Mammary epithelial cell (primary cell): ENCODE measurements at regions of chr9 and their contacts with region 1.

Region 1: GRCh38 chr9:87324613-87325194 is 173.0 kb upstream of the DAPK1 start:
- DNase-seq: peak; percentile 45
- H3K4me3 ChIP-seq: no peak overlapping the region
- H3K27ac ChIP-seq: no peak overlapping the region
- H3K4me1 ChIP-seq: peaks cover 10% of the 10 kb centered on the region
- H3K27me3 ChIP-seq: no peaks in the 10 kb centered on the region
- CTCF ChIP-seq: peak; percentile 54 to 68

Region 2: DNA sequence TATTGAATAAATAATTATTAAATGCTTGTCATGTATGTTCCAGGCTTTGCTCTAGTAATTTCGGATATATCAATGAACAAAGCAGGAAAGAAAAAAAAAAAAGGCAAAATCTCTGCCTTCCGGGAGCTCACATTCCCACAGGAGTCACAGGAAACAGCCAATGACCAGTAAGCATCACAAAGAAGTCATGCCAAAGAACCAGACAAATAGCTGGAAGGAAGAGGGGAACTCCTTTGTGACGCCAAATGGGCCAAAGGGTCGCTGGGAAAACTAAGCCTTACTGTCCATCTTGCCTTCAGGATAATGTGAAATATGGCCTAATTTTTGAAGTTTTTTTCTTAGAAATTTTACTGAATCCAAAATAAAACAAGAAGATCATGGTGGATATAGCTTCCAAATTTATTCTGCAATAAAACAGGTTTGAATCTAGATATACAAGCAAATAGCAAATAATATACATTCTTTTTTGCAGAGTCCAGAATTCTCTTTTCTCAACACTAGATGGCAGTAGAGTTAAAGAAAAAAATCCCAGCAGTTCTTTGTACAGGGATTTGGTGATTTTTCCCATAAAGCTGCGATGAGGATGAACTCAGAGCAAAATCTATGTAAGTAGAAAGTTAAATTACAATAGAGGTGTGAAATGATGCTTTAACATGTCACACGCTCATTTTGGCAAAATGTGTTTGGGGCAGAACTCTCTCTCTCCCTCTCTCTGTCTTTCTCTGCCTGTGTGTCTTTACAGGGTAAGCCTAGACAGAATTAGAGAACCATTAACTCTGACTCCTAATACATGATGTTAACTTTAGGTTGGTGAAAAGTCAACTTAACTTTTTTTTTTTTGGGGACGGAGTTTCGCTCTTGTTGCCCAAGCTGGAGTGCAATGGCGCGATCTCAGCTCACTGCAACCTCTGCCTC is 910.5 kb before region 1 on chr9:
- CTCF ChIA-PET with region 1: no interaction called
- dilution Hi-C with region 1: no loop called
- in situ Hi-C with region 1: no loop called
- intact Hi-C with region 1: loop called (anchors 1 kb)
- DNase-seq: no peak
- H3K4me3 ChIP-seq: no peak overlapping the region
- H3K27ac ChIP-seq: no peak overlapping the region
- H3K4me1 ChIP-seq: no peaks in the 10 kb centered on the region
- H3K27me3 ChIP-seq: no peaks in the 10 kb centered on the region
- CTCF ChIP-seq: peak; percentile 59 to 61

Region 3: DNA sequence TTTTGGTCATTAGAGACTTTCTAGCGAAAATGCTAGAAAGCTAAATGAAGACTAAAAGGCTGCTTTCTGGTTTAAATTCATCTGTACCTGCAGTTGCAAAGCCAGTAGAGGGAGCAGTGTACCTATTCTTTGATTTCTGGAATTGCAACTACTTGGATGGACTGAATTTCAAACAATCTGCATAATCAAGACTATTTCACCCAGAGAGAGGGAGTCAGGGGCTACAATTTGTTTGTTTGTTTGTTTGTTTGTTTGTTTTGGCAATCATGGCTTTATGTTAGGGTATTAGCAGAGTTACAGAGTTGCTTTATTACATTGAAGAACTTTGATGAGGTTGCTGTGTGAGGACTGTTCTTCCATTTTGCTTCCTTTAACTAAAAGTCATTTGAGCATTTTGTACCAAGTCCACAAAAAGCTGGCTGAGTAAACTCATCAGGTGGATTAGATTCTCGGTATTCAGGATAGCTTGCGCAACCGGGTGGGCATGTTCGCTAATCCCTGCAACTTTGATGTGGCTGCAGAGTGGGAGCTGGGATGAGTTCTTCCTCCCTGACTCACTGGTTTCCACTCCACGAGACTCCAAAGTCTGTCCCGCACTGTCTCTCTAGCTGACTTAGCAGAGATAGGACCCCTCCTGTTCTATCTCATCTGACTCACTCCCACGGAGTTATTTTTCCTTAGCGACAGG is 890.5 kb before region 1 on chr9:
- CTCF ChIA-PET with region 1: no interaction called
- dilution Hi-C with region 1: no loop called
- in situ Hi-C with region 1: loop called (anchors 10 kb)
- intact Hi-C with region 1: loop called (anchors 1 kb)
- DNase-seq: peak; percentile 35
- H3K4me3 ChIP-seq: no peak overlapping the region
- H3K27ac ChIP-seq: no peak overlapping the region
- H3K4me1 ChIP-seq: peaks cover 8% of the 10 kb centered on the region
- H3K27me3 ChIP-seq: no peaks in the 10 kb centered on the region
- CTCF ChIP-seq: peak; percentile 82 to 84

Region 4: GRCh38 chr9:86614871-86615849 is 709.5 kb before region 1 on chr9:
- CTCF ChIA-PET with region 1: no interaction called
- dilution Hi-C with region 1: no loop called
- in situ Hi-C with region 1: loop called in 1 of 2 experiments (anchors 10 kb)
- intact Hi-C with region 1: loop called (anchors 5 kb)
- DNase-seq: peak; percentile 35
- H3K4me3 ChIP-seq: no peak overlapping the region
- H3K27ac ChIP-seq: no peak overlapping the region
- H3K4me1 ChIP-seq: no peaks in the 10 kb centered on the region
- H3K27me3 ChIP-seq: no peaks in the 10 kb centered on the region
- CTCF ChIP-seq: peak; percentile 56 to 62

Region 5: GRCh38 chr9:86637515-86637914 is 687.2 kb before region 1 on chr9:
- CTCF ChIA-PET with region 1: no interaction called
- dilution Hi-C with region 1: no loop called
- in situ Hi-C with region 1: loop called in 1 of 2 experiments (anchors 10 kb)
- intact Hi-C with region 1: loop called (anchors 1 kb)
- DNase-seq: no peak
- H3K4me3 ChIP-seq: no peak overlapping the region
- H3K27ac ChIP-seq: no peak overlapping the region
- H3K4me1 ChIP-seq: no peaks in the 10 kb centered on the region
- H3K27me3 ChIP-seq: no peaks in the 10 kb centered on the region
- CTCF ChIP-seq: peak; percentile 34 to 83

Region 6: DNA sequence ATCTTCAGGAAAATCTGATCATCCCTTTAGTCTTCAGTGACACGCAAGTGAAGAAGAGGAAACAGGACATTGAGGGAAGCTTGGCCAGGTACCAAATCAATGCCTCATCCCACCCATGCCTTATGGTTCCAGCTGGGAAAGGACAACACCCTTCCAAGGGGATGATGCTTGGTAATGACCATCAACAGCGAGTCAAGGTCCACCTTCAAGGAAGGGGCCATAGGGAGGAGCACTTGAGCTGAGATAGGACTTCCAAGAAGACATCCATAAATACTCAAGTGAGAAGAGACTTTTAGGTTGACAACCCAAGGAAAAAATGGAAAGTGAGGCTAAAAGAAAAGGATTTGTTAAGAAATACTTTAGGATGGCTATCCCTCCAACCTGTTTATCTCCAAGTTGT is 350.3 kb before region 1 on chr9:
- CTCF ChIA-PET with region 1: no interaction called
- dilution Hi-C with region 1: no loop called
- in situ Hi-C with region 1: loop called in 1 of 2 experiments (anchors 25 kb)
- intact Hi-C with region 1: loop called (anchors 1 kb)
- DNase-seq: no peak
- H3K4me3 ChIP-seq: no peak overlapping the region
- H3K27ac ChIP-seq: no peak overlapping the region
- H3K4me1 ChIP-seq: peaks cover 14% of the 10 kb centered on the region
- H3K27me3 ChIP-seq: no peaks in the 10 kb centered on the region
- CTCF ChIP-seq: peak in 1 of 2 donors; percentile 21

Region 7: GRCh38 chr9:87113874-87114273 is 210.8 kb before region 1 on chr9:
- CTCF ChIA-PET with region 1: no interaction called
- dilution Hi-C with region 1: no loop called
- in situ Hi-C with region 1: no loop called
- intact Hi-C with region 1: loop called (anchors 1 kb)
- DNase-seq: no peak
- H3K4me3 ChIP-seq: no peak overlapping the region
- H3K27ac ChIP-seq: no peak overlapping the region
- H3K4me1 ChIP-seq: peaks cover 13% of the 10 kb centered on the region
- H3K27me3 ChIP-seq: no peaks in the 10 kb centered on the region
- CTCF ChIP-seq: peak in 1 of 2 donors; percentile 26

Region 8: DNA sequence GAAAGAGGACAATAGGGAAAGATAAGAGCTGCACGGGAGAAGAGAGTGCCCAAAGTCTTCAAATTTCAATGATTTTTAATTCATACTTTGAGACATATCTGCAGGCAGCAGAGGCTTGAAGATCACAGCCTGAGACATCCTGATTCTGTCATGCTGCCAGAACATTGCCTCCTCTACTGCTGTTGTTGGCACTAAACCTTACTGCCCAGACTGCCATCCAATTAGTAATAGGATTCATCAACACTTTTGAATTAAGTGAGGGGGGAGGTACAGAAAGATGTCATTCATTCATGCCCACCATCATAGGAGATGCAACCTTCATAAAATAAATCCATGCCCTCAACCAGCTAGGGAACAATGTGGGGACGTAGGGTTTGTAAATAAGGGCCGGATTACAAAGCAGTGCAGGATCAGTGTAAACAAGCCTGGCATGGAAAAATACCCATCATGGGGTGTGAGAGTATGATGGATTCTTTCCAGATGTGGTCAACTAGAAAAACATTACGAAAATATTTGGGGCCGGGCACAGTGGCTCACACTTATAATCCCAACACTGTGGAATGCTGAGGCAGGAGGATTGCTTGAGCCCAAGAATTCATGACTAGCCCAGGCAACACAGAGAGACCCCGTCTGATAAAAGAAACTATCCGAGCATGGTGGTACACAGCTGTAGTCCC is 50.8 kb after region 1 on chr9:
- CTCF ChIA-PET with region 1: no interaction called
- dilution Hi-C with region 1: no loop called
- in situ Hi-C with region 1: no loop called
- intact Hi-C with region 1: no loop called
- DNase-seq: peak; percentile 84
- H3K4me3 ChIP-seq: no peak overlapping the region
- H3K27ac ChIP-seq: peak overlapping the region; percentile 62
- H3K4me1 ChIP-seq: peaks cover 32% of the 10 kb centered on the region
- H3K27me3 ChIP-seq: no peaks in the 10 kb centered on the region
- CTCF ChIP-seq: no peak